ENCODE measurements at regions of chr12 and their contacts with region 1.

Region 1: DNA sequence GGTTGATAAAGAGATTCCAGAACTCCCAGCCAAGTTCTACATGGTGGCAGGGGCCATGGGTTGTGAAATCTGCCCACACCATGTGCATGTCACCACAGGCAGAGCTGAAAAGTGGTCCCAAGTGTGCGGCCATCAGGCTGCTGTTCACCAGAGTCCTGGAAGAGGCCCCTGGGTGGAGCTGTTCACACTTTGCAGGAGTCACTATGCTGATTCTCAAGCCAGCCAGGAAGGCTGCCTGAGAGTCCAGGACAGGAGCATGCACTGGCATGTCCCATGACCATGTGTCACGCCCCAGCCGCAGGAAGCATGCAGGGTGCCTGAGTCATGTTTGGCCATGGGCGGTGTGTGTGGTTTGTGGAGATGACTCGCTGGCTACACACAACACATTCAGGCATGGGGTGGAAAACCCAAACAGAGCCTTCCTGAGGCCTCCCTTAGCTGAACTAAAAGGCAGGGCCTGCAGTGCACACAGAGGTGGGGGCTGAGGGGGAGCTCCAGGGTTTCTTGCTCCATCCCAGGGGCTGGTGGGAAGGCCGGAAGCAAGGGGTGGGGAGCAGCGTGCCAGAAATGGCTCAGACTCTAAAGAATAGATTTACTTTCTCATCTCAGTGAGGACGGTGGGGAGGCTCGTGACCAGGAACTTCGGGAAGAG is 19.4 kb downstream of the ABCB9 start:
- DNase-seq: peak; percentile 90
- H3K4me3 Mint-ChIP-seq: peak overlapping the region; percentile 34
- H3K27ac Mint-ChIP-seq: peak overlapping the region; percentile 72
- H3K4me1 Mint-ChIP-seq: peaks cover 42% of the 10 kb centered on the region
- H3K27me3 Mint-ChIP-seq: no peaks in the 10 kb centered on the region

Region 2: GRCh38 chr12:122860346-122861090 is 86.3 kb before region 1 on chr12:
- CTCF ChIA-PET with region 1: interaction called, 74 read pairs
- POLR2A ChIA-PET with region 1: interaction called, 9 read pairs
- DNase-seq: peak; percentile 84
- H3K4me3 Mint-ChIP-seq: no peak overlapping the region
- H3K27ac Mint-ChIP-seq: no peak overlapping the region
- H3K4me1 Mint-ChIP-seq: no peaks in the 10 kb centered on the region
- H3K27me3 Mint-ChIP-seq: no peaks in the 10 kb centered on the region

Region 3: DNA sequence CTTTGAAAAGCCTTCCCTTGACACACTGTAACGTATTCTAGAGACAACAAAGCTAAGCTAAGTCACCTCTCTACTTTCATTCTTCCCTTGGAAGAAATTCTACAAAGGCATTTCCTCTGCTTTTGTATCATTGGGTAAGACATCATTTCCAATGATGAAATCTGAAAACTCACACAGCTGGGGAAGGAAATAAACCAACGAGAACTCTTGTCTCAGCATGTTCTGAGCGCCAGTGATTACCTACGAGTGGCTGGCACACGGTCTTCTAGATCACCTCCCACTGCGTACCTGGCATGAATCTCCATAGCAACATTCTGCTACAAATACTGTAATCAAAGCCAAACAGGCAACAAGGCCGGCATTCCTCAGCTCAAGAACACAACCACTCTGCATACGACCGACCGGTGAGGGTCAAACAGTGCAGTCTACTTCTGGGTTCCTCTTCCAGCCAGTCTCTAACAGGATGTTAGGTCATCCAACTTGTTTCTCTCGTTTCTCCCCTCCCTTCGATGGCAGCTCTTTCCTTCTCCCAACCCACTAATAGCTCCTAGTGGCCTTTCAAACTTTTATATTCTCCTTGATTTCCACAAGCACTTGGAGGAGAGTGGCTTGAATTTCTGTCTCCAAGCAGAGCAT is 58.5 kb before region 1 on chr12:
- CTCF ChIA-PET with region 1: interaction called, 3 read pairs
- POLR2A ChIA-PET with region 1: interaction called, 15 read pairs
- DNase-seq: peak; percentile 51
- H3K4me3 Mint-ChIP-seq: peak overlapping the region; percentile 74
- H3K27ac Mint-ChIP-seq: peak overlapping the region; percentile 93
- H3K4me1 Mint-ChIP-seq: peaks cover 72% of the 10 kb centered on the region
- H3K27me3 Mint-ChIP-seq: no peaks in the 10 kb centered on the region

Region 4: DNA sequence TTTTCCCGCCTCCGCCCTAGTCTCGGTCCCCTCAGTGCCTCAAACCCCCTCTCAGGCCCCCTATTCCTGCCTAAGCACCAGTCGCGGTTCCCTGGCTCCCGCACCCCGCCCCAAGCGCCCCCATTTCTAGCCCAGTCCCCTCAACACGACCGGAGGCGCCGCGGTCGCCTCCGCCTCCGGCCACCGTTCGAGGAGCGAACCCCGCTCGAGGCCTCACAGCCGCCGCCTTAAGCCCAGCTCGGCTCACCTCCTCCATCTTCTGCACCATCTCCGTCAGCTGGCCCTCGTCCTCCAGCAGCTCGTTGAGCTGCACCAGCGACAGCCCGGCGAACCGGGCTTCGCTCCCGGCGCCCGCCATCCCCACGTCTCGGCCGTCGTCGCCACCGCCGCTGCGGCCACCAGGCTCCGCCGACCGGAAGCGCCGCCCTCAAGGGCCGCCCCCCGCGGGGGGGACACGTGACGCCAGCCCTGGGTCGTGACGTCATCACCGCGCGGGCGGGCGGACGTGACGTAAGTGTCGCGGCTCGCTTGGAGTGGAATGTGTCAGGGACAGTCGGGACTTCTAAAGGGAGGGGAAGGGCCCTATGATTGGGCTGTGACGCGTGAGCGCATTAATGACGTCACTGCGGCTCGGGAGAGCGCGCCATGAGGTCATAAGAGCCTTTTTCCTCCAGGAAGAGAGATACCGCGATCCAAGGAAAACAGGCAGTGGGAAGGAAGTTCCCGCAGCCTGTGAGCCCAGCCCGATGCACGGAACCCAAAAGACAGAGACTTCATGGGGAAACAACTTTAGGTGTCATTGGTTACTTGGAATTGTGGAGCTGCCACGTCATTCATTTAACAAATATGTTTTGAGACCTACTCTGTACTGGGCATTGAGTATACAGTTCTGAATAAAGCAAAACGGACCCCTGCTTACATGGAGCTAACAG is 50.8 kb before region 1 on chr12 and contains the start of gene VPS37B:
- CTCF ChIA-PET with region 1: interaction called, 3 read pairs
- POLR2A ChIA-PET with region 1: interaction called, 15 read pairs
- DNase-seq: peak; percentile 92
- H3K4me3 Mint-ChIP-seq: peak within 1 kb of the TSS; percentile 83
- H3K27ac Mint-ChIP-seq: peak within 1 kb of the TSS; percentile 70
- H3K4me1 Mint-ChIP-seq: peaks cover 86% of the 10 kb centered on the region
- H3K27me3 Mint-ChIP-seq: no peaks in the 10 kb centered on the region
- total RNA-seq, gene VPS37B: 27.1 to 27.7 TPM